ENCODE measurements at regions of chr3 and their contacts with region 1.

Region 1: GRCh38 chr3:175149675-175150074 is 290.5 kb downstream of the NAALADL2 start:
- DNase-seq: peak; percentile 5
- ATAC-seq: no peak
- H3K4me3 ChIP-seq: no peak overlapping the region
- H3K27ac ChIP-seq: no peak overlapping the region
- H3K4me1 ChIP-seq: no peaks in the 10 kb centered on the region
- H3K27me3 ChIP-seq: no peaks in the 10 kb centered on the region
- CTCF ChIP-seq: no peak
- POLR2A ChIP-seq: no peak
- RAD21 ChIP-seq: no peak

Region 2: DNA sequence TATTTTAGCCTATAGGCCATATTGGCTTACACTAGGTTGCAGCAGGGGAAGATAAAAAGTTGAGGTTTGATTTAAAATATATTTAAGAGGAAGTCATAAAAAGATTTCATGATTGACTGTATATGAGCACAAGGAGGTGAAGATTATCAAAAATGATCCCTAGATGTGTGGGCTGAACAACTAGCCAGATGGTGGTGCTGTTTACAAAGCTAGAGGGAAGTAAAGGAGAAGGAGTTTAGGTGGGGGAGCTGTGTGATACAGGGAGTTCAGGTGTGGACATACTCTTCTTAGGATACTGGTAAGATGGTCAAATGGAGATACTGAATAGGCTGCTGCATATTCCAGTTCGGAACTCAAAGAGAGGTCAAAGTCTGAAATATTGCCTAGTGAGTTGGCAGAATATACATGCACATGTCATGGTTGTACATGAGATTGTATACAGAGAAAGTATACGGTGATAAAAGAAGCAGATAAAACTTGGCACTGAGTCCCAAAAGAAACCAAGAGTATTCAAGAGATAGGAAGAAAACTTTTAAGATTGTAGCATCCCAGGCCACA is 1024.3 kb before region 1 on chr3:
- CTCF ChIA-PET with region 1: no interaction called
- POLR2A ChIA-PET with region 1: no interaction called
- dilution Hi-C with region 1: no loop called
- in situ Hi-C with region 1: no loop called
- intact Hi-C with region 1: loop called (anchors 5 kb)
- DNase-seq: peak; percentile 65
- ATAC-seq: peak; percentile 87
- H3K4me3 ChIP-seq: no peak overlapping the region
- H3K27ac ChIP-seq: no peak overlapping the region
- H3K4me1 ChIP-seq: peaks cover 5% of the 10 kb centered on the region; the same call in 1 of the 2 replicates
- H3K27me3 ChIP-seq: no peaks in the 10 kb centered on the region
- CTCF ChIP-seq: peak; percentile 80
- POLR2A ChIP-seq: no peak
- RAD21 ChIP-seq: peak; percentile 91

Region 3: DNA sequence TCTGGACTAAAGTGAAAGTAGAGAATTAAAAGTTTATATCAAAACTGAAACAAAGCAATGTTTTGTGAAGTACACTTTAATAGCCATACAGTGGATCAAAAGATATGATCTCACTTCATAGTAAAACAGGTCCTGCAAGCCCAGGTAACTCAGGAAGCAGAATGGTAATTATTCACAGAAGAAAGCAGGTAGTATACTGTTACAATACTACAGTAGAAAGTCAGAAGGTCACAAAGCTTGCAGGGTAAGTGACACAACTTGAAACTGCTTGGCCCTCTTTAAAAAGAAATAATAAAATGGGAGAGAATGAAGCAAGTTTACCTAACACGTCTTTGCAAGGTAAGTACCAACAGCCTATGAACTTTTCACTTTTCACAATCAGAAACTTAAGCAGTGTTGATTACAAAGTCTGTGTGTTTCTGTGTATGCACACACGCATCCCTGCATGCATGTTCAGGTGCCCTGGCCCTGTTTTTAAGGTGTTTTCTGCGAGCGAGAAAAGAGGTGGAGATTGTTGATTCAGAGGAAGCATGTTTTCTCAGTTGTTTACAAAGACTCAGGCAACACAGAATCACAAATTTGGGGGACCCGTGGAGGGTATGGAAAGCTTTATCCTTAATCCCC is 290.5 kb before region 1 on chr3 and contains the start of gene NAALADL2:
- CTCF ChIA-PET with region 1: no interaction called
- POLR2A ChIA-PET with region 1: no interaction called
- dilution Hi-C with region 1: no loop called
- in situ Hi-C with region 1: no loop called
- intact Hi-C with region 1: loop called (anchors 10 kb)
- DNase-seq: no peak
- ATAC-seq: no peak
- H3K4me3 ChIP-seq: no peak within 1 kb of the TSS
- H3K27ac ChIP-seq: no peak within 1 kb of the TSS
- H3K4me1 ChIP-seq: peaks cover 5% of the 10 kb centered on the region; the same call in 1 of the 2 replicates
- H3K27me3 ChIP-seq: no peaks in the 10 kb centered on the region
- CTCF ChIP-seq: no peak
- POLR2A ChIP-seq: no peak
- RAD21 ChIP-seq: no peak
- total RNA-seq, gene NAALADL2: 19.2 and 20.6 TPM in 2 replicates

Region 4: DNA sequence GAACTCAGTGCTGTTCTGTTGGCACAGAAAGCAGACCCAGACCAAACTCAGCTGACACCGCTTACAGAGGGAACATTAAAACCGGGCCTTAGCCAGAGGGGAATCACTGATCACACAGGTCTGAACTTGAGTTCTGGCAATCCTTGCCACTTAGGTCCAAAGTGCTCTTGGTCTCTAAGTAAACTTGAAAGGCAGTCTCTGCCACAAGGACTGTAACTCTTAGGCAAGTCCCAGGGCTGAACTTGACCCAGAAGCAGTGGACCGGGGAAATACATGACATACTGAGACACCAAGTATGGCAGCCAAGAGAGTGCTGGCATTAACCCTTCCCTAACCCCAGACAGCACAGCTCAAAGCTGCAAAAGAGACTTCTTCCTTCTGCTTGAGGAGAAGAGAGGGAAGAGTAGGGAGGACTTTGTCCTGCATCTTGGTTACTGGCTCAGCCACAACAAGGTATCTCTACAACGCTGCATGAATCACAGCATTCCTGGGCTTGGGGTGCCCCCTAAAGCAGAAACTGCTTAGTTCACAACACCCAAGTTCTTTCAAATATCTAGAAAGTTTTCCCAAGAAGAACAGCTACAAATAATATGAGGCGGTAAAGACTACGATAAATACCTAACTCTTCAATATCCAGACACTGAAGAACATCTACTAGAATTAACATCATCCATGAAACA is 258.0 kb before region 1 on chr3:
- CTCF ChIA-PET with region 1: no interaction called
- POLR2A ChIA-PET with region 1: no interaction called
- dilution Hi-C with region 1: no loop called
- in situ Hi-C with region 1: no loop called
- intact Hi-C with region 1: loop called (anchors 10 kb)
- DNase-seq: peak; percentile 9
- ATAC-seq: no peak
- H3K4me3 ChIP-seq: no peak overlapping the region
- H3K27ac ChIP-seq: no peak overlapping the region
- H3K4me1 ChIP-seq: 0 out of 2 replicates have a peak, but pooled peaks cover 2% of the 10 kb centered on the region
- H3K27me3 ChIP-seq: no peaks in the 10 kb centered on the region
- CTCF ChIP-seq: no peak
- POLR2A ChIP-seq: no peak
- RAD21 ChIP-seq: peak; percentile 29; the same call in 1 of the 2 replicates

Region 5: GRCh38 chr3:174949526-174949925 is 200.1 kb before region 1 on chr3:
- CTCF ChIA-PET with region 1: no interaction called
- POLR2A ChIA-PET with region 1: no interaction called
- dilution Hi-C with region 1: no loop called
- in situ Hi-C with region 1: no loop called
- intact Hi-C with region 1: loop called (anchors 5 kb)
- DNase-seq: peak; percentile 97
- ATAC-seq: peak; percentile 72
- H3K4me3 ChIP-seq: no peak overlapping the region
- H3K27ac ChIP-seq: peak overlapping the region; percentile 86
- H3K4me1 ChIP-seq: peaks cover 11% of the 10 kb centered on the region
- H3K27me3 ChIP-seq: no peaks in the 10 kb centered on the region
- CTCF ChIP-seq: no peak
- POLR2A ChIP-seq: no peak
- RAD21 ChIP-seq: peak; percentile 10; the same call in 1 of the 2 replicates